IMR-90 (cell line): ENCODE measurements at regions of chr3 and their contacts with region 1.

Region 1: GRCh38 chr3:165854696-165855095 is 17.5 kb upstream of the BCHE start:
- DNase-seq: no peak
- ATAC-seq: no peak
- H3K4me3 ChIP-seq: no peak overlapping the region
- H3K27ac ChIP-seq: no peak overlapping the region
- H3K4me1 ChIP-seq: no peaks in the 10 kb centered on the region
- H3K27me3 ChIP-seq: no peaks in the 10 kb centered on the region
- CTCF ChIP-seq: peak; percentile 46
- POLR2A ChIP-seq: 0 out of 2 replicates have a peak, but pooled peaks have one; percentile 23
- RAD21 ChIP-seq: peak; percentile 40

Region 2: DNA sequence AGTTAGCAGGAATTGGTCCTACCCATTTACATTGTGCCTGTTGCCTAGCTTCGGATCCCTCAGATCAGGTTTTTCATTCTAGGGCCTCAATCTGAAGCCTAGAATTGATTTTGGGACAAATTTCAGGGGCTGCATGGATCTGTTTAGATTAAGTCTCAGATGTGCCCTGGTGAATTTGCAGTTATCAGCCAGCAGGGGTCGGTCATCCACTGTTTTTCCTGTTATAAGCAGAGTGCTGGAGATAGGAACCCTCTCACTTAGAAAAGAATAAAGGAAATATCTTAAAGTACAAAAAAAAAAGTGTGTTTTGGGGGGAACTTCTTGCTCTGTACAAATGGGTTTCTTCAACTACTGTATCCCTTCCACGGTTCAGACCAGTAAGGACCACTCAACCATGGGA is 229.9 kb before region 1 on chr3:
- CTCF ChIA-PET with region 1: no interaction called
- POLR2A ChIA-PET with region 1: no interaction called
- dilution Hi-C with region 1: no loop called
- in situ Hi-C with region 1: no loop called
- intact Hi-C with region 1: loop called (anchors 1 kb)
- DNase-seq: peak; percentile 50
- ATAC-seq: peak; percentile 88
- H3K4me3 ChIP-seq: no peak overlapping the region
- H3K27ac ChIP-seq: no peak overlapping the region
- H3K4me1 ChIP-seq: no peaks in the 10 kb centered on the region
- H3K27me3 ChIP-seq: no peaks in the 10 kb centered on the region
- CTCF ChIP-seq: peak; percentile 63
- POLR2A ChIP-seq: no peak
- RAD21 ChIP-seq: peak; percentile 73

Region 3: GRCh38 chr3:165837058-165837525 is 17.6 kb before region 1 on chr3 and contains the start of gene BCHE:
- CTCF ChIA-PET with region 1: no interaction called
- POLR2A ChIA-PET with region 1: no interaction called
- dilution Hi-C with region 1: no loop called
- in situ Hi-C with region 1: no loop called
- intact Hi-C with region 1: no loop called
- DNase-seq: peak; percentile 30
- ATAC-seq: 0 out of 2 replicates have a peak, but pooled peaks have one; percentile 11
- H3K4me3 ChIP-seq: no peak within 1 kb of the TSS
- H3K27ac ChIP-seq: no peak within 1 kb of the TSS
- H3K4me1 ChIP-seq: no peaks in the 10 kb centered on the region
- H3K27me3 ChIP-seq: no peaks in the 10 kb centered on the region
- CTCF ChIP-seq: no peak
- POLR2A ChIP-seq: no peak
- RAD21 ChIP-seq: no peak
- total RNA-seq, gene BCHE: 1.6 and 1.9 TPM in 2 replicates